B cell (primary cell): ENCODE measurements at regions of chr11 and their contacts with region 1.

Region 1: GRCh38 chr11:57456960-57457642 is 3.2 kb upstream of the RTN4RL2 start:
- DNase-seq: peak; percentile 86
- ATAC-seq: peak; percentile 70
- H3K4me3 ChIP-seq: no peak overlapping the region
- H3K4me3 Mint-ChIP-seq: peak overlapping the region; percentile 67
- H3K27ac ChIP-seq: no peak overlapping the region
- H3K27ac Mint-ChIP-seq: no peak overlapping the region
- H3K4me1 ChIP-seq: peaks cover 37 to 41% of the 10 kb centered on the region in 2 donors
- H3K4me1 Mint-ChIP-seq: peaks cover 26% of the 10 kb centered on the region
- H3K27me3 ChIP-seq: peaks cover 0 to 51% (median 28%) of the 10 kb centered on the region in 4 experiments
- H3K27me3 Mint-ChIP-seq: peaks cover 48% of the 10 kb centered on the region
- CTCF ChIP-seq: peak; percentile 97

Region 2: GRCh38 chr11:57213342-57214095 is 243.6 kb before region 1 on chr11:
- CTCF ChIA-PET with region 1: no interaction called
- POLR2A ChIA-PET with region 1: no interaction called
- intact Hi-C with region 1: no loop called
- DNase-seq: no peak
- ATAC-seq: no peak
- H3K4me3 ChIP-seq: no peak overlapping the region
- H3K4me3 Mint-ChIP-seq: no peak overlapping the region
- H3K27ac ChIP-seq: no peak overlapping the region
- H3K27ac Mint-ChIP-seq: no peak overlapping the region
- H3K4me1 ChIP-seq: no peaks in the 10 kb centered on the region
- H3K4me1 Mint-ChIP-seq: no peaks in the 10 kb centered on the region
- H3K27me3 ChIP-seq: peaks cover 0 to 4% (median 0%) of the 10 kb centered on the region in 4 experiments
- H3K27me3 Mint-ChIP-seq: peaks cover 17% of the 10 kb centered on the region
- CTCF ChIP-seq: no peak

Region 3: GRCh38 chr11:57432714-57433163 is 24.4 kb before region 1 on chr11:
- CTCF ChIA-PET with region 1: interaction called, 22 read pairs
- POLR2A ChIA-PET with region 1: no interaction called
- intact Hi-C with region 1: no loop called
- DNase-seq: no peak
- ATAC-seq: no peak
- H3K4me3 ChIP-seq: no peak overlapping the region
- H3K4me3 Mint-ChIP-seq: no peak overlapping the region
- H3K27ac ChIP-seq: no peak overlapping the region
- H3K27ac Mint-ChIP-seq: no peak overlapping the region
- H3K4me1 ChIP-seq: no peaks in the 10 kb centered on the region
- H3K4me1 Mint-ChIP-seq: no peaks in the 10 kb centered on the region
- H3K27me3 ChIP-seq: no peaks in the 10 kb centered on the region
- H3K27me3 Mint-ChIP-seq: peaks cover 6% of the 10 kb centered on the region
- CTCF ChIP-seq: no peak

Region 4: GRCh38 chr11:57474017-57474802 is 17.1 kb after region 1 on chr11:
- CTCF ChIA-PET with region 1: interaction called, 148 read pairs
- POLR2A ChIA-PET with region 1: no interaction called
- intact Hi-C with region 1: no loop called
- DNase-seq: no peak
- ATAC-seq: no peak
- H3K4me3 ChIP-seq: no peak overlapping the region
- H3K4me3 Mint-ChIP-seq: peak overlapping the region; percentile 4
- H3K27ac ChIP-seq: no peak overlapping the region
- H3K27ac Mint-ChIP-seq: no peak overlapping the region
- H3K4me1 ChIP-seq: peaks cover 30 to 31% of the 10 kb centered on the region in 2 donors
- H3K4me1 Mint-ChIP-seq: peaks cover 25% of the 10 kb centered on the region
- H3K27me3 ChIP-seq: peaks cover 0 to 31% (median 3%) of the 10 kb centered on the region in 4 experiments
- H3K27me3 Mint-ChIP-seq: peaks cover 5% of the 10 kb centered on the region
- CTCF ChIP-seq: no peak

Region 5: GRCh38 chr11:57499413-57499982 is 42.4 kb after region 1 on chr11:
- CTCF ChIA-PET with region 1: interaction called, 78 read pairs
- POLR2A ChIA-PET with region 1: no interaction called
- intact Hi-C with region 1: loop called (anchors 5 kb)
- DNase-seq: peak; percentile 60
- ATAC-seq: peak; percentile 100
- H3K4me3 ChIP-seq: peak overlapping the region in 2 of 5 experiments; percentile 12 to 57
- H3K4me3 Mint-ChIP-seq: peak overlapping the region; percentile 38
- H3K27ac ChIP-seq: no peak overlapping the region
- H3K27ac Mint-ChIP-seq: no peak overlapping the region
- H3K4me1 ChIP-seq: peaks cover 0 to 6% of the 10 kb centered on the region in 2 donors
- H3K4me1 Mint-ChIP-seq: peaks cover 6% of the 10 kb centered on the region
- H3K27me3 ChIP-seq: no peaks in the 10 kb centered on the region
- H3K27me3 Mint-ChIP-seq: no peaks in the 10 kb centered on the region
- CTCF ChIP-seq: no peak

Region 6: GRCh38 chr11:57567515-57568329 is 110.6 kb after region 1 on chr11 and contains the start of gene UBE2L6:
- CTCF ChIA-PET with region 1: interaction called, 5 read pairs
- POLR2A ChIA-PET with region 1: no interaction called
- intact Hi-C with region 1: loop called (anchors 2 kb)
- DNase-seq: peak; percentile 82
- ATAC-seq: peak; percentile 69
- H3K4me3 ChIP-seq: peak within 1 kb of the TSS; percentile 83 to 99 (median 98)
- H3K4me3 Mint-ChIP-seq: peak within 1 kb of the TSS; percentile 99
- H3K27ac ChIP-seq: peak within 1 kb of the TSS; percentile 83 to 92
- H3K27ac Mint-ChIP-seq: peak within 1 kb of the TSS; percentile 99
- H3K4me1 ChIP-seq: peaks cover 18 to 26% of the 10 kb centered on the region in 2 donors
- H3K4me1 Mint-ChIP-seq: peaks cover 36% of the 10 kb centered on the region
- H3K27me3 ChIP-seq: no peaks in the 10 kb centered on the region
- H3K27me3 Mint-ChIP-seq: no peaks in the 10 kb centered on the region
- CTCF ChIP-seq: peak; percentile 95
- total RNA-seq, gene UBE2L6: 66.3 and 70.7 TPM in 2 replicates

Region 7: GRCh38 chr11:58592760-58593472 is 1135.8 kb after region 1 on chr11:
- CTCF ChIA-PET with region 1: no interaction called
- POLR2A ChIA-PET with region 1: interaction called, 14 read pairs
- intact Hi-C with region 1: no loop called
- DNase-seq: no peak
- ATAC-seq: no peak
- H3K4me3 ChIP-seq: no peak overlapping the region
- H3K4me3 Mint-ChIP-seq: no peak overlapping the region
- H3K27ac ChIP-seq: no peak overlapping the region
- H3K27ac Mint-ChIP-seq: no peak overlapping the region
- H3K4me1 ChIP-seq: peaks cover 3 to 6% of the 10 kb centered on the region in 2 donors
- H3K4me1 Mint-ChIP-seq: peaks cover 35% of the 10 kb centered on the region
- H3K27me3 ChIP-seq: no peaks in the 10 kb centered on the region
- H3K27me3 Mint-ChIP-seq: no peaks in the 10 kb centered on the region
- CTCF ChIP-seq: no peak